ENCODE measurements at regions of chr20 and their contacts with region 1.

Region 1: DNA sequence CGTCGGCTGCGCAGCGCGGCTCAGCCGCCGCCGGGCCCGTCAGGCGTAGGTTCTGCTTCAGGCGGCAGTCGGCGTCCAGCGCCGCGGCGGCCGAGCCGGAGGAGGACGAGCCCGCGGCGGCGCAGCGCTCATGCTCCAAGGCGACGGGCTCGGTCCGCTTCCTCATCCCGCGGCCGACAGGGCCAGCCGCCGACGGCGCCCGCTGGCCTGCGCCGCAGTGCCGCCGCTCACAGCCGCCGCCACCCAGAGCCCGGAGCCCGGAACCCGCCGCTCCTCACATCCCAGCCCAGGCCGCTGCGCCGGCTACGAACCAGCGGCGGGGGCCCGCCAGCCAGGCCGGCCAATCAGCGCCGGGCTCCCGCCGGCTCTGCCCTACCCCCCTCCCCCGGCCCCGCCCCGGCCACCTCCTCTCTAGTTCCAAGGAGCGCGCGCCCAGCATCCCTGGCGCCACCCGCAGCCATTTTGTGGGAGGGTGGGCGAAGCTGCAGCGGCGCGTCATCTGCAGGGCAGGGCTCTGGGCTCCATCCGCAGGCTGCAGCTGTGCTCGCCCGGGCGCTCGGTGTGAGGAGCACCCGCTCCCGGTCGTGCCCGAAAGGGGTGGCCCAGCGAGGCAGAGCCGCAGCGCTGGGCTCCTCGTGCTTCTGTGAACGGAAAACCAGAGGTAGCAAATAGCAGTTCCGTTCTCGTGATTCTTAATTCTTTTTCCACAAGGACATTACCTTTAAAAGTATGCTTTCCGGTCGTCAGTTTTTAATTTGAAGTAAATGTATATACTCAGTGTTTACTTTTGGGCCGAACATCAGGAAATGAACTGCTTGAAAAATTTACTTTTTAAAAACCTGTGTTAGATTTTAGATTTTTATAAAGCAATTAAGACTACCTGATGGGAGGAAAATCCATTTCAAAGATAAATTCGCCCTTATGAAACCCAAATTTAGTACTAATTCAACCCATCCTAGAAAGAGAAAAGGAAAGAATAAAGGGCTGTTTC is at the start of gene ABHD12:
- DNase-seq: peak; percentile 96 to 98 (median 98)
- ATAC-seq: peak; percentile 99 to 100 (median 100)
- H3K4me3 ChIP-seq: peak within 1 kb of the TSS; percentile 67 to 97 (median 87)
- H3K27ac ChIP-seq: peak within 1 kb of the TSS; percentile 48 to 93 (median 88)
- H3K4me1 ChIP-seq: peaks cover 0 to 19% (median 7%) of the 10 kb centered on the region in 12 donors
- H3K27me3 ChIP-seq: no peaks in the 10 kb centered on the region
- CTCF ChIP-seq: peak in 1 of 12 donors; percentile 4
- POLR2A ChIP-seq: peak; percentile 49 to 51
- total RNA-seq, gene ABHD12: 15.6 to 43.8 (median 26.5) TPM

Region 2: GRCh38 chr20:25065625-25066338 is 325.1 kb before region 1 on chr20:
- intact Hi-C with region 1: loop called in 6 of 10 experiments (anchors 5 to 10 kb)
- DNase-seq: peak in 2 of 5 donors; percentile 50 to 53
- ATAC-seq: peak; percentile 67 to 88 (median 73)
- H3K4me3 ChIP-seq: peak overlapping the region in 1 of 12 donors; percentile 10
- H3K27ac ChIP-seq: no peak overlapping the region
- H3K4me1 ChIP-seq: peaks cover 0 to 20% (median 5%) of the 10 kb centered on the region in 12 donors
- H3K27me3 ChIP-seq: peaks cover 0 to 16% (median 3%) of the 10 kb centered on the region in 9 donors
- CTCF ChIP-seq: peak; percentile 68 to 95 (median 86)
- POLR2A ChIP-seq: no peak

Region 3: GRCh38 chr20:25178563-25179438 is 212.0 kb before region 1 on chr20:
- intact Hi-C with region 1: no loop called
- DNase-seq: no peak
- ATAC-seq: peak; percentile 67 to 90 (median 82)
- H3K4me3 ChIP-seq: no peak overlapping the region
- H3K27ac ChIP-seq: no peak overlapping the region
- H3K4me1 ChIP-seq: peaks cover 0 to 6% (median 0%) of the 10 kb centered on the region in 12 donors
- H3K27me3 ChIP-seq: no peaks in the 10 kb centered on the region
- CTCF ChIP-seq: peak; percentile 54 to 80 (median 70)
- POLR2A ChIP-seq: no peak

Region 4: DNA sequence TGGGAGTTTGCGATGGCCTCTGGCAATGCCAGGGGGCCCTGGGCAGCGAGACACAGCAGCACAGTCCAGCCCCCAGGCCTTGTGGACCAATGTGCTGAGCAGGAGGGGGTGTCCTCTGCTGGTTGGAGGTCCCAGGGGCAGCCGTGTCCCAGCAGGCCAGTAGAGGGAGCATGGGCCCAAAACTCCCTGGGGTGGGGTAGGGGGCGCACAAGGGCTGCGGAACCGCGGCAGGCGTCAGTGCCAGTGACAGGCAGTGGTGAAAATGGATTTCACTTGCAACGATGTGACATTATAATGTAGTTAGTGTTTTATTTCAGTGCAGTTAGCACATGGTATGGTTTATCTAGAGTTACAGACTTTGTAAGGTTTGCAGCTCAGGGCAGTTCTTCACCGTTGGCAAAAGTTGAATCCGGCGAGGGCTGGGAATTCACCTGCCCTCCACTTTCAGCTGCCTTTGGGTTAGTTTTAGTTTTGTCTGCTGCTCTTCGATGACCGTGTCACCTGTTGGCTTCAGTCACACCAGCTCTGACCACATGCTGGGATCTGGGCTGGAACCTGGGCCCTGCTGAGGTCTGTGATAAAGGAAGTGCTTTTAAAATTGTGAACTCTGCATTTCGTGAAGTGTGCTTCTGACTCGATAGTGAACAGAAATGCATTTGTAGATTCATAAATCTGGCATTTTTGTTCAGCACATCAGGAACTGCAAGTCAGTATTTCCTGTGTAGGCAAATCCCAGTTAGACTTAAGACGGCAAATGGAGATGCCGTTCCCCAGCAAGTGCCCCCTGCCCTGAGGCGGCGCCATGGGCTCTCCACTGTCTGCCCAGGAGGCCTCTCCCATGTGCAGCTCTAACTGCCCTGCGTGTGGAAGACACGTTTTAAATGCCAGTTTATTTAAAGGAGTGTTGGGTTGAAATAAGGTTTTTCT is 96.1 kb before region 1 on chr20:
- intact Hi-C with region 1: loop called in 5 of 10 experiments (anchors 5 to 10 kb)
- DNase-seq: peak in 3 of 5 donors; percentile 56 to 65 (median 64)
- ATAC-seq: peak; percentile 11 to 46 (median 25)
- H3K4me3 ChIP-seq: no peak overlapping the region
- H3K27ac ChIP-seq: peak overlapping the region; percentile 11 to 85 (median 76)
- H3K4me1 ChIP-seq: peaks cover 9 to 76% (median 37%) of the 10 kb centered on the region in 12 donors
- H3K27me3 ChIP-seq: no peaks in the 10 kb centered on the region
- CTCF ChIP-seq: peak; percentile 41 to 78 (median 61)
- POLR2A ChIP-seq: no peak

Region 5: DNA sequence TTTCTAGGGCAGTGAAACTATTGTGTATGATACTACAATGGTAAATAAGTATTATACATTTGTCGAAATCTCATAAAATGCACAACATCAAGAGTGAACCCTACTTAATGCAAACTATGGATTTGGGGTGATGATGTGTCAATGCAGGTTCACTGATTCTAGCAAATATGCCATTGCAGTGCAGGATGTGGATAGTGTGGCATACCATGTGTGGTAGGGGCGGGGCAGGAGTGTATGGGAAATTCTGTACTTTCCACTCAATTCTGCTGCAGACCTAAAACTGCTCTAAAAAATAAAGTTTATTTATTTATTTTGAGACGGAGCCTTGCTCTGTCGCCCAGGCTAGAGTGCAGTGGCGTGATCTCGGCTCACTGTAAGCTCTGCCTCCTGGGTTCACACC is 44.5 kb before region 1 on chr20:
- intact Hi-C with region 1: loop called in 2 of 10 experiments (anchors 5 kb)
- DNase-seq: no peak
- ATAC-seq: no peak
- H3K4me3 ChIP-seq: no peak overlapping the region
- H3K27ac ChIP-seq: no peak overlapping the region
- H3K4me1 ChIP-seq: peaks cover 0 to 10% (median 0%) of the 10 kb centered on the region in 12 donors
- H3K27me3 ChIP-seq: no peaks in the 10 kb centered on the region
- CTCF ChIP-seq: no peak
- POLR2A ChIP-seq: no peak

Region 6: GRCh38 chr20:25623736-25624499 is 233.1 kb after region 1 on chr20 and contains the start of gene NANP:
- intact Hi-C with region 1: loop called in 1 of 10 experiments (anchors 10 kb)
- DNase-seq: peak; percentile 95 to 98 (median 97)
- ATAC-seq: peak; percentile 94 to 97 (median 96)
- H3K4me3 ChIP-seq: peak within 1 kb of the TSS; percentile 72 to 99 (median 84)
- H3K27ac ChIP-seq: peak within 1 kb of the TSS; percentile 53 to 97 (median 87)
- H3K4me1 ChIP-seq: peaks cover 0 to 23% (median 15%) of the 10 kb centered on the region in 12 donors
- H3K27me3 ChIP-seq: no peaks in the 10 kb centered on the region
- CTCF ChIP-seq: peak in 2 of 12 donors; percentile 4 to 9
- POLR2A ChIP-seq: peak in 1 of 2 donors; percentile 71
- total RNA-seq, gene NANP: 2.5 to 4.4 (median 3.1) TPM